ENCODE measurements at regions of chr12 and their contacts with region 1.

Region 1: DNA sequence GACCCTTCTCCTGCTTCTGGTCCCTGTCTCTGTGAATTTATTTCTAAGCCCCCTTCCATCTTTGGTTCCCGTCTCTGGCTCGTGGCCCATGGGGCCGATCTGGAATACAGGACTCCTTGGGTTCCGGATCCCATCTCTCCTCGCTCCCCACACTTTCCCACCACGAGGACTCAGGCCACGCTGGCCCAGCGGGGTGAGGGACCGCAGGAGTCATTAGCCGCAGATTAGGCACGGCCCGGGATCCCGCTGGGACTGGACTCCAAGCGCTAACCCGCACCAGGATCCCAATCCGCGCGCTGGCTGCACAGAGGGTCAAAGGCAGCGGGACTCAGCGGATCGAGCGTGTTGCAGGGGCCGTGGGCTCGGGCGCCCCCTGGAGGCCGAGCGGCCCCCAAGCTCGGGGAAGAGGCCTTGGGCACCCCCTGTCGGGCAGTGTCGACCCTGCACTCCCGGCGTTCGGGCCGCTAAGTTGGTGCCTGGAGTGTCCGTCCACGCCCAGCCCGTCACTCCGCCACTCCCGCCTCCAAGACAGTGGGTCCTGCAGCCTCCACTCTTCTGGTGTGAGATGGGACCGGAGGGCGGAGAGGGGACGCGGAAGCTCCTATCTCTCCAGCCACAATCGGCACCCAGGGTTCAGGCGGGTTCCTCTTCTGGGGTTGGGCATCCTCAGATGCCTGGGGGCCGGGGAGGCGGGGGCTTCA is 9.5 kb downstream of the SHMT2 start:
- DNase-seq: peak; percentile 90
- ATAC-seq: peak; percentile 64
- H3K4me3 Mint-ChIP-seq: peak overlapping the region; percentile 83
- H3K27ac Mint-ChIP-seq: peak overlapping the region; percentile 40
- H3K4me1 Mint-ChIP-seq: peaks cover 91% of the 10 kb centered on the region
- H3K27me3 Mint-ChIP-seq: peaks cover 43% of the 10 kb centered on the region

Region 2: GRCh38 chr12:57213058-57213715 is 25.8 kb before region 1 on chr12:
- CTCF ChIA-PET with region 1: interaction called, 246 read pairs
- POLR2A ChIA-PET with region 1: no interaction called
- DNase-seq: peak; percentile 88
- ATAC-seq: peak; percentile 61
- H3K4me3 Mint-ChIP-seq: no peak overlapping the region
- H3K27ac Mint-ChIP-seq: peak overlapping the region; percentile 66
- H3K4me1 Mint-ChIP-seq: peaks cover 35% of the 10 kb centered on the region
- H3K27me3 Mint-ChIP-seq: peaks cover 41% of the 10 kb centered on the region

Region 3: DNA sequence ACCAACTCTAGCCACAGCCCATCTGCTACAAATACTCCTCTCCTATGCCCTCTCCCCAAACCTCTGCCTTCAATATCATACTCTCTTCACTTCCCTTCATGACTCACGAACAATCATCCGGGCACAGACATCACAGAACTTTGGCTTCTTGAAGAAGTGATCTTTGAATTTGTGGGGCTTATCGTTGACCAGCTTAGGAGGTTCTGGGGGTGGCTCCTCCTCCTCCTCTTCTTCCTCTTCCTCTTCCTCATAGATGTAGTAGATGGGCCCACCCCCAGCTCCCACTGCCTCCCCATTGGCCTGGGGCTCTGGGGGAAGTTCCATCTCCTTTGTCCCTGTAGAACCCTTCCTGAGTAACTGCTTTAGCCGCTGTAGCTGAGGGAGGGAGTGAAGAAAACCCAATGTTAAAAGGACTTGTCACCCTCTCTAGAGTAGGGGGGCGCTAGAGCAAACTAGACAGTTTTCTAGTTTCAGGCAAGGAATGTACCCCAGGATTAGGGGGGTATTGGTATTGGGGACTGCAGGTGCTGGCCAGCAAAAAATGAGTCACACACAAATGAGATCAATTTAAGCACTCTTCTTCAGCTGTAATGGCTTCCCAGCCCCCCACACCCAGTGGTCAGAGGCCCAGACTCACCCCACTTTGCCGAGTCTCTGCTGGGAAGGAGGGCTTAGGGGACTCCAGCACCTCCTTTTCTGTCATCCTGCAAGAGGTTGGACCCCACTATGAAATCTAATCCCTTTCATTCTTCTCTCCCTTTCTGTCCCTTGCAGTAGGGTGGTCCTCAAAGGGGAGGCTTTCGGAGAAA is 10.1 kb after region 1 on chr12:
- CTCF ChIA-PET with region 1: interaction called, 389 read pairs
- POLR2A ChIA-PET with region 1: interaction called, 3 read pairs
- DNase-seq: no peak
- ATAC-seq: peak; percentile 58
- H3K4me3 Mint-ChIP-seq: peak overlapping the region; percentile 46
- H3K27ac Mint-ChIP-seq: peak overlapping the region; percentile 44
- H3K4me1 Mint-ChIP-seq: peaks cover 11% of the 10 kb centered on the region
- H3K27me3 Mint-ChIP-seq: no peaks in the 10 kb centered on the region

Region 4: GRCh38 chr12:57261428-57261865 is 22.4 kb after region 1 on chr12:
- CTCF ChIA-PET with region 1: interaction called, 21 read pairs
- POLR2A ChIA-PET with region 1: no interaction called
- DNase-seq: no peak
- ATAC-seq: no peak
- H3K4me3 Mint-ChIP-seq: no peak overlapping the region
- H3K27ac Mint-ChIP-seq: no peak overlapping the region
- H3K4me1 Mint-ChIP-seq: peaks cover 8% of the 10 kb centered on the region
- H3K27me3 Mint-ChIP-seq: no peaks in the 10 kb centered on the region

Region 5: GRCh38 chr12:57410534-57410933 is 171.5 kb after region 1 on chr12:
- CTCF ChIA-PET with region 1: no interaction called
- POLR2A ChIA-PET with region 1: no interaction called
- DNase-seq: no peak
- ATAC-seq: no peak
- H3K4me3 Mint-ChIP-seq: no peak overlapping the region
- H3K27ac Mint-ChIP-seq: no peak overlapping the region
- H3K4me1 Mint-ChIP-seq: no peaks in the 10 kb centered on the region
- H3K27me3 Mint-ChIP-seq: no peaks in the 10 kb centered on the region

Region 6: DNA sequence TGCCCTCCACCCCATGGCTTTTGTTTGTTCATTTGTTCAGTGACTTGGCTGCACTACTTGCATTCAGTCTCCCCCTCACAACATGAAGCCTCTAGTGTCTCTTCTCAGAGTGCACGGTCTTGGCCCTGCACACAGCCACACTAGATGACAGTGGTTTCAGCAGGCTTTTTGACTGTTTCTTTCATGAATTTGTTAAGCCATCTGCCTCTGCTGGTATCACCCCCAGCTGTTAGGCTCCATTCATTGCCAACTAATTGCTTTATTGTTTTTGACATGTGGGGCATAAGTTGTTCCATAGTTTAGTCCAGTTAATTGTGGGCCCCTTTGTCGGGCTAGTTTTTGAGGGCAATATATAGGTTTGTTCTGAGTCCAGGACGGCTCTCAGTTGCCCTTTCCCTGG is 473.7 kb after region 1 on chr12:
- CTCF ChIA-PET with region 1: no interaction called
- POLR2A ChIA-PET with region 1: no interaction called
- DNase-seq: peak; percentile 13
- ATAC-seq: no peak
- H3K4me3 Mint-ChIP-seq: no peak overlapping the region
- H3K27ac Mint-ChIP-seq: no peak overlapping the region
- H3K4me1 Mint-ChIP-seq: peaks cover 7% of the 10 kb centered on the region
- H3K27me3 Mint-ChIP-seq: no peaks in the 10 kb centered on the region

Measured in activated CD8-positive, alpha-beta T cell treated with anti-CD3 and anti-CD28 coated beads, Interleukin-2, amount 10 ng/mL, durations not matched to agents 7 days and 5 days (primary cell).